Pancreas (tissue), 10 donors: ENCODE measurements at regions of chr1 and their contacts with region 1.

Region 1: GRCh38 chr1:33460947-33461629 is 11.4 kb upstream of the ZSCAN20 start:
- DNase-seq: peak in 1 of 6 donors; percentile 27
- ATAC-seq: peak in 3 of 4 donors; percentile 22 to 79 (median 66)
- H3K4me3 ChIP-seq: no peak overlapping the region
- H3K27ac ChIP-seq: no peak overlapping the region
- H3K4me1 ChIP-seq: no peaks in the 10 kb centered on the region
- H3K27me3 ChIP-seq: no peaks in the 10 kb centered on the region
- CTCF ChIP-seq: no peak

Region 2: GRCh38 chr1:33094971-33095604 is 366.0 kb before region 1 on chr1:
- intact Hi-C with region 1: loop called in 1 of 3 experiments (anchors 10 kb)
- DNase-seq: peak in 3 of 6 donors; percentile 30 to 71 (median 41)
- ATAC-seq: peak in 3 of 4 donors; percentile 64 to 80 (median 78)
- H3K4me3 ChIP-seq: no peak overlapping the region
- H3K27ac ChIP-seq: no peak overlapping the region
- H3K4me1 ChIP-seq: no peaks in the 10 kb centered on the region
- H3K27me3 ChIP-seq: no peaks in the 10 kb centered on the region
- CTCF ChIP-seq: peak; percentile 94 to 98 (median 98)

Region 3: GRCh38 chr1:33378976-33379375 is 82.1 kb before region 1 on chr1:
- intact Hi-C with region 1: loop called in 1 of 3 experiments (anchors 10 kb)
- DNase-seq: no peak
- ATAC-seq: no peak
- H3K4me3 ChIP-seq: no peak overlapping the region
- H3K27ac ChIP-seq: no peak overlapping the region
- H3K4me1 ChIP-seq: peaks cover 0 to 6% (median 0%) of the 10 kb centered on the region in 3 donors
- H3K27me3 ChIP-seq: no peaks in the 10 kb centered on the region
- CTCF ChIP-seq: no peak